ENCODE measurements at regions of chr7 and their contacts with region 1.

Region 1: DNA sequence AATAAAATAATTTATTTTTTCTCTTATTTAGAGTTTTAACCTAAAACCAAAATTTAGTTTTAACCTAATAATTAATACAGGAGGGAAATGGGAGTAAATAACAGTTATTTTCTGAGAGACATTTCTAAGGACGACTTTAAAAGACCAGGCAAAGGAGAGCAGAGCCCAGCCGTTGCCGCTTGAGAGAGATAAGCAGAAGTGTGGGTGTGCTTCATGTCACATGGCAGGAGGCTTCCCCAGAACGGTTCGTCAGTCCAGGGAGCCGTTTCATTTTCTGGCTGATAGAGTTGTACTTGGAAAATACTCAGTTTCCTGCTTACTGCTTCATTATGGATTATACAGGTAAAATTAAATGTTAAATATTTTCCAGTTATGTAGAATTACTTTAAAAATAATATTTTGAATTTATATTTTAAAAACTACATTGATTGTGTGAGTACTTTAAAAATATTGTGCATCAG is 61.4 kb downstream of the ST7 start:
- DNase-seq: peak; percentile 49
- ATAC-seq: no peak
- H3K4me3 Mint-ChIP-seq: no peak overlapping the region
- H3K27ac Mint-ChIP-seq: no peak overlapping the region
- H3K4me1 Mint-ChIP-seq: peaks cover 56% of the 10 kb centered on the region
- H3K27me3 Mint-ChIP-seq: peaks cover 2% of the 10 kb centered on the region

Region 2: GRCh38 chr7:116671681-116672595 is 342.8 kb before region 1 on chr7 and contains the start of gene MET:
- CTCF ChIA-PET with region 1: no interaction called
- POLR2A ChIA-PET with region 1: no interaction called
- intact Hi-C with region 1: loop called in 1 of 2 experiments (anchors 10 kb)
- DNase-seq: peak; percentile 82
- ATAC-seq: peak; percentile 97
- H3K4me3 Mint-ChIP-seq: peak within 1 kb of the TSS; percentile 46
- H3K27ac Mint-ChIP-seq: no peak within 1 kb of the TSS
- H3K4me1 Mint-ChIP-seq: peaks cover 7% of the 10 kb centered on the region
- H3K27me3 Mint-ChIP-seq: peaks cover 47% of the 10 kb centered on the region
- total RNA-seq, gene MET: 0.63 to 0.91 TPM

Region 3: DNA sequence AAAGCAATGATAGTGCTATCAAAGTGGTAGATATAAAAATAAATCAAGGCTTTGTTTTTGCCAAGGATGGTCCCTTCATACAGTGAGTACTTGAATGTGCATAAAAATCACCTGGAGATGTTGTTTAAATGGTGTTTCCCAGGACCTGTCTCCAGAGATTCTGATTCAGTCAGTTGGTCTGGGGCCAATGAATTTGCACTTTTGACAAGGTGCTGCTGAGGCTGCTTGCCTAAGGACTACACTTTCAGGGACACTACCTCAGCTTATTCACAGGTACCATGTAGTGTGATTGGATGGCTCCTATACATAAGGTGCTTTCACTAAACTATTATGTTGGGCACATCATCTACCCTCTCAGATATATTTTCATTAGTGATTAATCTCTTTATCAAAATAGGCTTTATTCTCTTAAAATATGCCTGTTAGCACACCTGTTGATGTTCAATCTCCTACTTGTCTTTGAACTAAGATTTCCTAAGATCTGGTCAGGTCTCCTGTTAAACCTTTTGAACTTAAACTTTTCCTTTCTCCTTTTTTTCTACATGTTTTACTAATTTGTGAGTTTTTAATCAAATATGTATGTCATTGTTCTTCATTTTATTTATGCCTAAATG is 128.1 kb before region 1 on chr7:
- CTCF ChIA-PET with region 1: no interaction called
- POLR2A ChIA-PET with region 1: no interaction called
- intact Hi-C with region 1: no loop called
- DNase-seq: no peak
- ATAC-seq: no peak
- H3K4me3 Mint-ChIP-seq: no peak overlapping the region
- H3K27ac Mint-ChIP-seq: no peak overlapping the region
- H3K4me1 Mint-ChIP-seq: peaks cover 25% of the 10 kb centered on the region
- H3K27me3 Mint-ChIP-seq: no peaks in the 10 kb centered on the region

Region 4: DNA sequence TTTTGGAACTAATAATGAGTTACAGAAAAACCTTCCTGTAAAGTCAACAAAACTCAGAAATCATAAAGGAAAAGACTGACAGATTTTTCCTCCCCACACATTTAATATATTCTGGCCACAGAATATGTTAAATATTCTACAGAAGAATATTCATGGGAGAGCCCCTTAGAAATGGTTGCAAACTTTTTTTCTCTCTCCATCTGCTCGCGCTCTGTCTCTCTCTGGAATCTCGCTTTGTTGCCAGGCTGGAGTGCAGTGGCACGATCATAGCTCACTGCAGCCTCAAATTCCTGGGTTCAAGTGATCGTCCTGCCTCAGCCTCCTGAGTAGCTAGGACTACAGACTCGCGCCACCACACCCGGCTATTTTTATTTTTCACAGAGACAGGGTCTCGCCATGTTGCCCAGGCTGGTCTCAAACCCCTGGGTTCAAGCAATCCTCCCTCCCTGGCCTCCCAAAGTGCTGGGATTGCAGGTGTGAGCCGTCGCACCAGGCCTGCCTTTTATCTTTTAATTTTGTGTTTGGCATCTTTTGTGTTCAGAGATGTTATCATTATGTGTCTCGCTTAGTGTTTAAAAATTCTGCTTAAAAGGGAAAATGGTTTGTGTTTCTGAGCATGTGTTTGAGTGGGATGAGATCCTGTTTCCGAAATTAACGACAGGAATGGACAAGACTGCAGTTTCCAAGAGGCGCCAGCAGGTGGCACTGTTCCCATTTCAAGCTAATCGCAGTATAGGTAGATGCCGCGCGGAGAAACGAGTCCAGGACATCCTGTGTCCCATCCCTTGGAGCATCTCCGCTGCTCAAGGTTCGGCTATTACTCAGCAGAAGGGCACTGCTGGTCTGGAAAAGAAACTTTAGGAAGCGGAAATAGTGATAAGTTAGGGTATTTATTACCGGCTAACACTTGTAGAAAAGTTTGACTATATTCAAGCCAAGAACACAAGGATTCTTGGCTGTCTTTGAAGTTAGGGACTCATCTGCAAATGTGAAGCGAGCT is 84.5 kb before region 1 on chr7:
- CTCF ChIA-PET with region 1: interaction called, 7 read pairs
- POLR2A ChIA-PET with region 1: no interaction called
- intact Hi-C with region 1: loop called (anchors 2 to 5 kb)
- DNase-seq: peak; percentile 86
- ATAC-seq: peak; percentile 85
- H3K4me3 Mint-ChIP-seq: no peak overlapping the region
- H3K27ac Mint-ChIP-seq: no peak overlapping the region
- H3K4me1 Mint-ChIP-seq: peaks cover 6% of the 10 kb centered on the region
- H3K27me3 Mint-ChIP-seq: peaks cover 3% of the 10 kb centered on the region

Region 5: DNA sequence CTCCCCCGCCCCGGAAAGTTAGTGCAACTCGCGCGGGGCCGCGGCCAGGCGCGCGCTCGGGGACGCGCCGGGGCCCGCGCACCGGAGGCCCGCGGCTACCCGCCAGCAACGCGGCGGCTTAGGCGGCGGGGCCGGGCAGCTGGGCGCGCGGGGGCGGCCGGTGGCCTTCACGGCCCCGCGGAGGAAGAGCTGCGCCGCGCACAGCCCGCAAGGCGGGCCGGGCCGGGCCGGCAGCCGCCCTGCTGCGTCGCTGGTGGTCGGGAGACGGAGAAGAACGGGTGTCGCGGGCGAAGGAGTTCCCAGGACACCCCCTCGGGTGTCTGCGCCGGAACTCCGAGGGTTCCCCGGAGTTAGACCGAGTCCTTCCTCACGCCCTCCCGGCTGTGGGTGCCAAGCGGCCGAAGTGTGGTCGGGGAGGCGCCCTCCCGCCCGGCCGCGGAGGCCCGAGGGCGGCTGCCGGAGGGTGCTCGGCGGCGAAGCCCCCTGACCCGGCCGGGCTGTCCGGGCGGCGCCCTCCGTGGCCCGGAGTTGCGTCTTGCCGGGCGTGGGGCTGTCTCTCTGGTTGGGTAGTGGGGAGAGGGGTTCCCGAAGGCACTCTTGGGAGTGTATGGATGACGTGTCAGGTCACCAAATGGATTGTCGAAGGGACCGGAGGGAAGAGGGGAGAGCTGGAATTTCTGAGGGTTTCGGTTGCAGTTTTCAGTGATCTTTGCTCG is 60.8 kb before region 1 on chr7:
- CTCF ChIA-PET with region 1: no interaction called
- POLR2A ChIA-PET with region 1: no interaction called
- intact Hi-C with region 1: loop called (anchors 1 to 2 kb)
- DNase-seq: peak; percentile 43
- ATAC-seq: peak; percentile 54
- H3K4me3 Mint-ChIP-seq: peak overlapping the region; percentile 93
- H3K27ac Mint-ChIP-seq: peak overlapping the region; percentile 97
- H3K4me1 Mint-ChIP-seq: peaks cover 31% of the 10 kb centered on the region
- H3K27me3 Mint-ChIP-seq: no peaks in the 10 kb centered on the region

Measured in activated CD4-positive, alpha-beta T cell treated with anti-CD3 and anti-CD28 coated beads for 36 hours (primary cell).